ENCODE measurements at regions of chr5 and their contacts with region 1.

Region 1: GRCh38 chr5:142133330-142134206 is 25.0 kb downstream of the NDFIP1 start:
- DNase-seq: no peak
- ATAC-seq: no peak
- H3K4me3 ChIP-seq: no peak overlapping the region
- H3K27ac ChIP-seq: no peak overlapping the region
- H3K4me1 ChIP-seq: peaks cover 0 to 6% of the 10 kb centered on the region in 2 experiments; a peak in 3 of 5 replicates
- H3K27me3 ChIP-seq: no peaks in the 10 kb centered on the region
- CTCF ChIP-seq: no peak
- EP300 ChIP-seq: no peak
- POLR2A ChIP-seq: no peak
- RAD21 ChIP-seq: no peak

Region 2: GRCh38 chr5:141701360-141702119 is 432.0 kb before region 1 on chr5:
- CTCF ChIA-PET with region 1: no interaction called
- POLR2A ChIA-PET with region 1: no interaction called
- in situ Hi-C with region 1: loop called (anchors 10 kb)
- intact Hi-C with region 1: no loop called
- DNase-seq: no peak
- ATAC-seq: peak; percentile 16; the same call in 2 of the 3 replicates
- H3K4me3 ChIP-seq: no peak overlapping the region
- H3K27ac ChIP-seq: no peak overlapping the region
- H3K4me1 ChIP-seq: peaks cover 0 to 9% of the 10 kb centered on the region in 2 experiments; a peak in 3 of 5 replicates
- H3K27me3 ChIP-seq: peaks cover 21 to 62% of the 10 kb centered on the region in 2 experiments
- CTCF ChIP-seq: no peak
- EP300 ChIP-seq: no peak
- POLR2A ChIP-seq: no peak
- RAD21 ChIP-seq: no peak

Region 3: GRCh38 chr5:142275496-142275895 is 141.9 kb after region 1 on chr5:
- CTCF ChIA-PET with region 1: no interaction called
- POLR2A ChIA-PET with region 1: no interaction called
- in situ Hi-C with region 1: no loop called
- intact Hi-C with region 1: no loop called
- DNase-seq: no peak
- ATAC-seq: no peak
- H3K4me3 ChIP-seq: no peak overlapping the region
- H3K27ac ChIP-seq: no peak overlapping the region
- H3K4me1 ChIP-seq: peaks cover 5 to 6% of the 10 kb centered on the region in 2 experiments
- H3K27me3 ChIP-seq: no peaks in the 10 kb centered on the region; a peak in 3 of 5 replicates
- CTCF ChIP-seq: no peak
- EP300 ChIP-seq: no peak
- POLR2A ChIP-seq: no peak
- RAD21 ChIP-seq: no peak

Measured in K562 (cell line).